Activated T-helper 2 cell treated with anti-CD3 and anti-CD28 coated beads, Interferon-gamma antibody, Interleukin-2, Interleukin-4, amounts not matched to agents 10 μg/mL and 5 μg/mL and 100 μg/mL, durations not matched to agents 14 hours and 24 hours and 36 hours (primary cell): ENCODE measurements at regions of chr10 and their contacts with region 1.

Region 1: DNA sequence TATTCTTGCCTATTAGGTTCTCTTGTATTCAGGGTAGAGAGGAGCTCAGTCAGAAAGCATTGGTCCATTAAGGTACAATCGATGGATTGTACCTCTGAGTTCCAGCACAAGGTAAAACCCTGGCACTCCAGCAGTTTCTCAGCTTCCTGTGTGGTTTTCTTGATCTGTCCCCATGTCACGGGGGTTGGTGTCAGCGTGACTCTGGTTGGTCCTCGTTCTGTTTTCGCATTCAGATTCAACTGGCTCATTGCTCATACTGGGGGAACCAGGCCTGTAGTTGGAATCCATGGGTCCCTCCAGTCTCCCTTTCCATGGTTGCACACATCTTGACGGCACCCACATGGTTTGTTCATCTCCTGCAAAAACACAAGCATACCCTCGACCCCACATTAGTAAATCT is 32.7 kb upstream of the RASGEF1A start:
- DNase-seq: peak; percentile 54
- H3K4me3 Mint-ChIP-seq: no peak overlapping the region
- H3K27ac Mint-ChIP-seq: peak overlapping the region; percentile 61
- H3K4me1 Mint-ChIP-seq: peaks cover 54% of the 10 kb centered on the region
- H3K27me3 Mint-ChIP-seq: peaks cover 22% of the 10 kb centered on the region

Region 2: DNA sequence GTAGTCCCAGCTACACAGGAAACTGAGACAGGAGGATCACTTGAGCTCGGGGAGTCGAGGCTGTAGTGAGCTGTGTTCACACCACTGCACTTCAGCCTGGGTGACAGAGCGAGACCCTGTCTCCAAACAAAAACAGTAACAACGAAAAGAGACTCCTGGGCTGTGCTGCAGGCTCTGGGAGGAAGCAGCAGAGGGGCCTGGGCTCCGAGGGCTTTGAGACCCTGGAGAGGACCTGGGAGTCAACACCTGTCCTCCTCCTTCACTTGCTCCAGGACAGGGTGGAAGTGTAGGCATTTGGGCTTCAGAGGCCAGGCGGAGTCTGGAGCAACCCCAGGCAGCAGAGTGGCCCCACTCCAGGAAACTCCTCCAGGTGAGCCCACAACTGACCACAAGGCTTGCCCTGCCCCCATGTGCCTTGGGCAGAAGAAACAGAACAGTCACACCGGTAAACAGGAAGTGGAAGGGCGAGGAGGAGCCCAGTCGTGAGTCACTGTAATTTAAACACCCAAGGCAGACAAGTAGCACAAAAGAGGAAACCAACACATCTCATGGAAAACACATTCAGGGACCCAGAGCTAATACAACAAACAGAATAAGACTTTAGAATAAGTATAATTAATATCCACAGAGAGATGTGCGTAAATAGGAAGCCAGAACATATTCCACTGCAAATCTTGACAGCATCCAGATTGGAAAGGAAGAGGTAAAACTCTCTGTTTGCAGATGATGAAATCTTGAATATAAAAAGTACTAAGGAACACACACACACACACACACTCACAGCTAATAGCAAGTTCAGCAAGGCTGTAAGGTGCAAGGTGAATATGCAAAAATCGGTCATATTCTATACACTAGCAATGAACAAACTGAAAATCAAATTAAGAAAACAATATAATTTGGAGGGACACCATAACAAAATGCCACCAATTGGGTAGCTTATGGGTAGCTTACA is 12.2 kb before region 1 on chr10:
- intact Hi-C with region 1: loop called (anchors 1 kb)
- DNase-seq: peak; percentile 55
- H3K4me3 Mint-ChIP-seq: peak overlapping the region; percentile 34
- H3K27ac Mint-ChIP-seq: peak overlapping the region; percentile 74
- H3K4me1 Mint-ChIP-seq: peaks cover 36% of the 10 kb centered on the region
- H3K27me3 Mint-ChIP-seq: peaks cover 14% of the 10 kb centered on the region

Region 3: GRCh38 chr10:43333653-43334052 is 34.1 kb after region 1 on chr10:
- intact Hi-C with region 1: loop called (anchors 2 kb)
- DNase-seq: no peak
- H3K4me3 Mint-ChIP-seq: no peak overlapping the region
- H3K27ac Mint-ChIP-seq: no peak overlapping the region
- H3K4me1 Mint-ChIP-seq: peaks cover 23% of the 10 kb centered on the region
- H3K27me3 Mint-ChIP-seq: peaks cover 2% of the 10 kb centered on the region